MCF 10A (cell line): ENCODE measurements at regions of chr11 and their contacts with region 1.

Region 1: DNA sequence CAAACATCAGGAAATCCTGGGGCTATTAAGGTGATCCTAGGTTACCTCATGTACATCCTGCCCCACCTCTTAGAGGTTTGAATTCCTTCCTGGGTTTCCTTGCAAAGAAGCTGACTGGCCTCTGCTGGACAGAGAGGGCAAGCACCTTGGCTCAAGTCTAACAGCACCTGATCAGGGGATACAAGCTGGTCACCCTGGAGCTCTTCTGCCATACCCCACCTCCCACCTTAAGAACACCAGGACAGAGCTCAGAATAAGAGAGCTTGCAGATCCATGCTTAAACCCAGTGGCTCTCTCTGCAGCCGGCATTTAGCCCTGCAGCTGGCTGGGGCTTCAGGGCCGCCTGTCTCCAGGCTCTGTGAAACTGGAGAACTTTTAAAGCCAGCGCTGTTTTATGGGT is 386.6 kb upstream of the NARS2 start:
- DNase-seq: peak; percentile 81
- H3K4me3 Mint-ChIP-seq: no peak overlapping the region
- H3K27ac Mint-ChIP-seq: no peak overlapping the region
- H3K4me1 Mint-ChIP-seq: no peaks in the 10 kb centered on the region
- H3K27me3 Mint-ChIP-seq: no peaks in the 10 kb centered on the region
- CTCF ChIP-seq: peak; percentile 59

Region 2: GRCh38 chr11:78659326-78660270 is 301.6 kb before region 1 on chr11:
- CTCF ChIA-PET with region 1: interaction called, 10 read pairs
- POLR2A ChIA-PET with region 1: no interaction called
- intact Hi-C with region 1: no loop called
- DNase-seq: peak; percentile 55
- H3K4me3 Mint-ChIP-seq: no peak overlapping the region
- H3K27ac Mint-ChIP-seq: no peak overlapping the region
- H3K4me1 Mint-ChIP-seq: peaks cover 24% of the 10 kb centered on the region
- H3K27me3 Mint-ChIP-seq: no peaks in the 10 kb centered on the region
- CTCF ChIP-seq: no peak

Region 3: DNA sequence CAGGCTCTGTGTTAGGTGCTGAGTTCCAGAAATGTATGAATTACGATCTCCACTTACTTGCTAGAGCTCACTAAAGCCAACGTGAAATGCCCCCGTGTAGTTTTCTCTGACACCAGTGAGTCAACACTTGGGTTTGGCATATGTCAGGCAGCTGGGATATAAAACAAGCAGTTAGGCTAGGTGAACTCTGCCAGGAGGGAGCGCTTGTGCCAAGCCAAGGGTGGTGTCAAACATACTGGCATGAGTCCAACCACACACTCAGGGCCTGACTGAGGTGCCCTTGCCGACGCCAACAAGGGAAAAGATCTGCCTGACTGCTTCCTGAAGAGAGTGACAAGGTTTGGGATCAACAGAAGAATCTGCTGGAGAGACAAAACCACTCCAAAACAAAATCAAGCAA is 218.8 kb before region 1 on chr11:
- CTCF ChIA-PET with region 1: interaction called, 3 read pairs
- POLR2A ChIA-PET with region 1: no interaction called
- intact Hi-C with region 1: loop called (anchors 2 kb)
- DNase-seq: peak; percentile 92
- H3K4me3 Mint-ChIP-seq: no peak overlapping the region
- H3K27ac Mint-ChIP-seq: peak overlapping the region; percentile 54
- H3K4me1 Mint-ChIP-seq: peaks cover 15% of the 10 kb centered on the region
- H3K27me3 Mint-ChIP-seq: no peaks in the 10 kb centered on the region
- CTCF ChIP-seq: no peak

Region 4: DNA sequence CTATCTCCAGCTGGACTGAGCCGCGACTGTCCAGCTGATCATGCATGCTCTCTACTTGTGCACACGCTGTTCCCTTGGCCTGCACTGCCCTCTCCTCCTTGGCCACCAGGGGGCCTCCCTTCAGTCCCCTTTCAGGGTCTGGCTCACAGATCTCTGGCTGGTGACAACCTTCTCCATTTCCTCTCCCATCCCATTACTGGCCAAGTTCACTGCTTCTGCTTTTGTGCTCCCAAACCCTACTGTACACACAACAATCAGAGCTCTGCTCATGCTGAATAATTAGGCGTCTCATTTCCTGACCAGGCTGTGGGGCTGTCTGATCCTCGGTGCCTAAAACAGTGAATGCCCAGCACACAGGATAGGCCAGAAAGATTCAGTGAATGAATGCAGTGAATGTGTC is 162.6 kb before region 1 on chr11:
- CTCF ChIA-PET with region 1: interaction called, 5 read pairs
- POLR2A ChIA-PET with region 1: no interaction called
- intact Hi-C with region 1: loop called (anchors 1 kb)
- DNase-seq: peak; percentile 71
- H3K4me3 Mint-ChIP-seq: no peak overlapping the region
- H3K27ac Mint-ChIP-seq: no peak overlapping the region
- H3K4me1 Mint-ChIP-seq: peaks cover 23% of the 10 kb centered on the region
- H3K27me3 Mint-ChIP-seq: no peaks in the 10 kb centered on the region
- CTCF ChIP-seq: peak; percentile 66

Region 5: DNA sequence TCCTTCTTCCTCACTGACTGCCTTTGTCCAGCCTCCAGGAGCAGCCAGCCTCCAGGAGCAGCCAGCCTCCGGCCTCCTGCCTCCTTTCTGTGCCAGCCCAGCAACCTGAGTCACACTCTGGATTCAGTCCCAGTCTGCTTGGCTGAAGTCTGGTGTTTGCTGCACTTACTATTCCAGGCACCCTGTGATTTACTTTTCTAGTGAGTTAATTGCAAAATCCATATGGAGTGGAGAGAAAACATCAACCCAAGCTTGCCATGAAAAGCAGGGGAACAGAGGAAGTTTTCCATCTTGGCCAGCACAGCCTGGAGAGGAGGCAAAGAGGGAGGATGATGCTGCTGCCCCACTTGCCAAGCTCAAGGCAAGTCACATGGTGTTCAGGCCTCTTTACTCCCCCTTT is 79.1 kb after region 1 on chr11:
- CTCF ChIA-PET with region 1: no interaction called
- POLR2A ChIA-PET with region 1: no interaction called
- intact Hi-C with region 1: no loop called
- DNase-seq: peak; percentile 53
- H3K4me3 Mint-ChIP-seq: no peak overlapping the region
- H3K27ac Mint-ChIP-seq: no peak overlapping the region
- H3K4me1 Mint-ChIP-seq: no peaks in the 10 kb centered on the region
- H3K27me3 Mint-ChIP-seq: no peaks in the 10 kb centered on the region
- CTCF ChIP-seq: no peak